ENCODE measurements at regions of chr10 and their contacts with region 1.

Region 1: GRCh38 chr10:97210543-97210961 is 24.8 kb upstream of the SLIT1 start:
- DNase-seq: peak; percentile 79
- H3K4me3 Mint-ChIP-seq: no peak overlapping the region
- H3K27ac Mint-ChIP-seq: no peak overlapping the region
- H3K4me1 Mint-ChIP-seq: no peaks in the 10 kb centered on the region
- H3K27me3 Mint-ChIP-seq: peaks cover 30% of the 10 kb centered on the region
- CTCF ChIP-seq: peak; percentile 92

Region 2: GRCh38 chr10:96374985-96375830 is 835.3 kb before region 1 on chr10:
- CTCF ChIA-PET with region 1: interaction called, 16 read pairs
- POLR2A ChIA-PET with region 1: no interaction called
- intact Hi-C with region 1: no loop called
- DNase-seq: peak; percentile 94
- H3K4me3 Mint-ChIP-seq: peak overlapping the region; percentile 66
- H3K27ac Mint-ChIP-seq: no peak overlapping the region
- H3K4me1 Mint-ChIP-seq: peaks cover 15% of the 10 kb centered on the region
- H3K27me3 Mint-ChIP-seq: no peaks in the 10 kb centered on the region
- CTCF ChIP-seq: peak; percentile 95

Region 3: GRCh38 chr10:97032624-97033023 is 177.9 kb before region 1 on chr10:
- CTCF ChIA-PET with region 1: interaction called, 111 read pairs
- POLR2A ChIA-PET with region 1: interaction called, 3 read pairs
- intact Hi-C with region 1: loop called (anchors 1 kb)
- DNase-seq: no peak
- H3K4me3 Mint-ChIP-seq: no peak overlapping the region
- H3K27ac Mint-ChIP-seq: no peak overlapping the region
- H3K4me1 Mint-ChIP-seq: no peaks in the 10 kb centered on the region
- H3K27me3 Mint-ChIP-seq: peaks cover 30% of the 10 kb centered on the region
- CTCF ChIP-seq: no peak

Region 4: GRCh38 chr10:97072851-97073665 is 137.5 kb before region 1 on chr10:
- CTCF ChIA-PET with region 1: interaction called, 179 read pairs
- POLR2A ChIA-PET with region 1: interaction called, 5 read pairs
- intact Hi-C with region 1: loop called (anchors 1 kb)
- DNase-seq: peak; percentile 79
- H3K4me3 Mint-ChIP-seq: no peak overlapping the region
- H3K27ac Mint-ChIP-seq: no peak overlapping the region
- H3K4me1 Mint-ChIP-seq: peaks cover 5% of the 10 kb centered on the region
- H3K27me3 Mint-ChIP-seq: peaks cover 35% of the 10 kb centered on the region
- CTCF ChIP-seq: peak; percentile 94

Region 5: DNA sequence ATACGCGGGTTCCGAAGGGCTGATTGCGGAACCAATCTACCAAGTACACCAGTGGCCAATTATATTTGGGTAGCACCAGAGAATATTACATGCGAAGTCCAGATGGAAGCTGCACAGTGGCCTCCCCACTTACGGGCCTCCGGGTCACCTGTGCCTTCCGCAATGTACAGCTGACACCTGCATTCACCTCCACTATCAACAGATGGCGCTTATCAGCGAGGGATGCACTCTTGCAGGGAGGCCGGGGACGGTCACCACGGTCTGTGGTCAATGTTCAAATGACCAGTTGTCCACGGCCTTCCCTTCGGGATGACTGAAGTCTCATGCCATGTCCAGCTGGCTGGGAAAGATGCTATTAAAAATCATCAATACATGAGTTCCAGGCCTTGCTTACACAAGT is 72.4 kb before region 1 on chr10:
- CTCF ChIA-PET with region 1: interaction called, 12 read pairs
- POLR2A ChIA-PET with region 1: no interaction called
- intact Hi-C with region 1: no loop called
- DNase-seq: peak; percentile 4
- H3K4me3 Mint-ChIP-seq: no peak overlapping the region
- H3K27ac Mint-ChIP-seq: no peak overlapping the region
- H3K4me1 Mint-ChIP-seq: no peaks in the 10 kb centered on the region
- H3K27me3 Mint-ChIP-seq: peaks cover 34% of the 10 kb centered on the region
- CTCF ChIP-seq: no peak

Region 6: DNA sequence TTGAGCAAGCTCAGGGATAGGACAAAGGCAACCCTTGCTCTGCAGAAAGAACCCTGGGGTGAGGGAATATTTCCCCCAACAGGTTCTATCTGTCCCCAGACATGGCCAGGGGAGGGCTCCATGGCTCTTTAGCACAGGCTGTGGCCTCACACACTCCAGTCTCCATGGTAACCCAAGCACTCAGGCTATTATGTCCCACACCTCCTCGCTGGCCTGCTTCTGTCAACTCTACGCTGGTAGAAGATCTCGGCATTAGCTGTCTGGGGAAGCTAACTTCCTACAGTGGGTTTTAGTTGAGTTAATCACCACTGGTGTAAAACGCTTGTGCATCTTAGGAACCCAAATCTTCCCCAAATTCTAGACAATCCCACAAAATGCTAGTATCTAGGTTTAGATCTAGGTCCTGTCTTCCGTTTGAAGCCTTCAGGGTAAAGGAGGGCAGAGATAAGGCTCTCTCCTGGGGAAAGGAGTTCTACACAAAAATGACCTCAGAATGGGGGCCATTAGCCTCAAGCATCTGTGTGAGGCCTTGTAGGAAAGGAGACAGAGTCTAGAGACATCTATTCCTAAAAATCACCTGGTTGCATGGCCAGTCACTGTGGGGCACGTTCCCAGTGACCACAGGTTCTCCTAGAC is 11.9 kb after region 1 on chr10:
- CTCF ChIA-PET with region 1: interaction called, 56 read pairs
- POLR2A ChIA-PET with region 1: interaction called, 3 read pairs
- intact Hi-C with region 1: no loop called
- DNase-seq: no peak
- H3K4me3 Mint-ChIP-seq: no peak overlapping the region
- H3K27ac Mint-ChIP-seq: no peak overlapping the region
- H3K4me1 Mint-ChIP-seq: no peaks in the 10 kb centered on the region
- H3K27me3 Mint-ChIP-seq: no peaks in the 10 kb centered on the region
- CTCF ChIP-seq: no peak

Region 7: GRCh38 chr10:97400665-97401454 is 190.3 kb after region 1 on chr10 and contains the start of gene RRP12:
- CTCF ChIA-PET with region 1: no interaction called
- POLR2A ChIA-PET with region 1: no interaction called
- intact Hi-C with region 1: no loop called
- DNase-seq: peak; percentile 98
- H3K4me3 Mint-ChIP-seq: peak within 1 kb of the TSS; percentile 90
- H3K27ac Mint-ChIP-seq: peak within 1 kb of the TSS; percentile 98
- H3K4me1 Mint-ChIP-seq: no peaks in the 10 kb centered on the region
- H3K27me3 Mint-ChIP-seq: no peaks in the 10 kb centered on the region
- CTCF ChIP-seq: no peak
- total RNA-seq, gene RRP12: 66.1 and 86.7 TPM in 2 replicates

Region 8: DNA sequence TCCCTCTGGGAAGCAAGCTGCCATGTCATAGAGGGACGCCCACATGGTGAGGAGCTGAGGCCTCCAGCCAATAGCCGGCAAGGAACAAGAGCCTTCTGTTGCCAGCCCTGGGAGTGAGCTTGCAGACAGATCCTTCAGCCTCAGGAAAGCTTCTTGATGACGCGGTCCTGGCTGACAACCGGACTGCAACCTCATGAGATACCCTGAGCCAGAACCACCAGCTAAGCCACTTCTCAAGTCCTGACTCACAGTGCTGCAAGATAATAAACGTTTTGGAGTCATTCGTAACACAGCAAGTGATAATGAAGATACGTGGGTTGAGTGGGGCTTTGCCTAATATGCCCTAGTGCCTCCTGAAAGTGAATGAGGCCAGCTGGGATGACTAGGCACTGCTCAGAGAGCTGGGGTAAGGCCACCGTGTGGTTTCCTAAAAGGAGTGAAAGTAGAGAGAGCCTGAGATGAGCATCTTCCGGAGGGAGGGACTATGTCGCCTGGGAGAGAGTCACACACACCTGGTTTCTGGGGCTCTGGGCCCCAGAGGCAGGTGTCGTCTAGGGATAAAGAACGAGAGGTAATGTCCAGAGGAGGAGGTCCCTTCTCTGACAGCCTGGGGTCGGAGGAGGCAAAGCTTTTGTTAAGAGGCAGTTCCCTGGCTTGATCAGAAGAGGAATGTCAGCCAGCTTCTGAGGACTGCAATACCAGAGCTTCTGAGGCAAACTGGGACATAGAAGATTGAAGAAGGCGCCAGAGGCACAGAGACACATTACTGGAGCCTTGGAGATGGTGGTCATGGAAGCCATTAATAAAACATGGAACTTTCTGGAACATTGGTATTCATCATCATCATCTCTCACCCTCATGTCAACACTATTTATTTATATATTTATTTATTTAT is 1150.8 kb after region 1 on chr10:
- CTCF ChIA-PET with region 1: no interaction called
- POLR2A ChIA-PET with region 1: no interaction called
- intact Hi-C with region 1: no loop called
- DNase-seq: peak; percentile 26
- H3K4me3 Mint-ChIP-seq: no peak overlapping the region
- H3K27ac Mint-ChIP-seq: no peak overlapping the region
- H3K4me1 Mint-ChIP-seq: no peaks in the 10 kb centered on the region
- H3K27me3 Mint-ChIP-seq: no peaks in the 10 kb centered on the region
- CTCF ChIP-seq: no peak